K562 (cell line): ENCODE measurements at regions of chr4 and their contacts with region 1.

Region 1: GRCh38 chr4:105471566-105472176 is 2.2 kb downstream of the PPA2 start:
- DNase-seq: peak; percentile 70 to 85 (median 72)
- ATAC-seq: peak; percentile 71
- H3K4me3 ChIP-seq: peak overlapping the region; percentile 79
- H3K27ac ChIP-seq: peak overlapping the region; percentile 85
- H3K4me1 ChIP-seq: peaks cover 8 to 10% of the 10 kb centered on the region in 2 experiments; a peak in 2 of 5 replicates
- H3K27me3 ChIP-seq: no peaks in the 10 kb centered on the region
- CTCF ChIP-seq: peak; percentile 68 to 75 (median 70)
- EP300 ChIP-seq: no peak
- POLR2A ChIP-seq: no peak
- RAD21 ChIP-seq: peak; percentile 69 to 79

Region 2: GRCh38 chr4:104490770-104491480 is 980.7 kb before region 1 on chr4:
- CTCF ChIA-PET with region 1: no interaction called
- POLR2A ChIA-PET with region 1: no interaction called
- in situ Hi-C with region 1: no loop called
- intact Hi-C with region 1: loop called (anchors 10 kb)
- DNase-seq: peak; percentile 46 to 80 (median 56)
- ATAC-seq: peak; percentile 73
- H3K4me3 ChIP-seq: peak overlapping the region; percentile 40
- H3K27ac ChIP-seq: no peak overlapping the region
- H3K4me1 ChIP-seq: peaks cover 0 to 15% of the 10 kb centered on the region in 2 experiments; a peak in 3 of 5 replicates
- H3K27me3 ChIP-seq: no peaks in the 10 kb centered on the region
- CTCF ChIP-seq: no peak
- EP300 ChIP-seq: 0 out of 2 replicates have a peak, but pooled peaks have one; percentile 13
- POLR2A ChIP-seq: no peak
- RAD21 ChIP-seq: no peak

Region 3: GRCh38 chr4:105140684-105141490 is 330.8 kb before region 1 on chr4:
- CTCF ChIA-PET with region 1: no interaction called
- POLR2A ChIA-PET with region 1: interaction called, 3 read pairs
- in situ Hi-C with region 1: loop called (anchors 5 kb)
- intact Hi-C with region 1: loop called (anchors 1 kb)
- DNase-seq: peak in 3 of 4 experiments; percentile 12 to 66 (median 48)
- ATAC-seq: peak; percentile 87
- H3K4me3 ChIP-seq: no peak overlapping the region
- H3K27ac ChIP-seq: no peak overlapping the region
- H3K4me1 ChIP-seq: peaks cover 0 to 2% of the 10 kb centered on the region in 2 experiments; a peak in 3 of 5 replicates
- H3K27me3 ChIP-seq: no peaks in the 10 kb centered on the region; a peak in 1 of 5 replicates
- CTCF ChIP-seq: peak; percentile 60 to 81 (median 65)
- EP300 ChIP-seq: no peak
- POLR2A ChIP-seq: no peak
- RAD21 ChIP-seq: peak; percentile 59 to 68

Region 4: DNA sequence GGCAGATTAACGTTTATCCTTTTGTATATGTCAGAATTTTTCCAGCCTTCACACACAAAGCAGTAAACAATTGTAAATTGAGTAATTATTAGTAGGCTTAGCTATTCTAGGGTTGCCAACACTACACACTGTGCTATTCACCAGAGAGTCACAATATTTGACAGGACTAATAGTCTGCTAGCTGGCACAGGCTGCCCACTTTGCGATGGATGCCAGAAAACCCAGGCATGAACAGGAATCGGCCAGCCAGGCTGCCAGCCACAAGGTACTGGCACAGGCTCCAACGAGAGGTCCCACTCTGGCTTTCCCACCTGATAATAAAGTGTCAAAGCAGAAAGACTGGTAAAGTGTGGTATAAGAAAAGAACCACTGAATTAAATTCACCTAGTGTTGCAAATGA is 230.2 kb before region 1 on chr4:
- CTCF ChIA-PET with region 1: no interaction called
- POLR2A ChIA-PET with region 1: no interaction called
- in situ Hi-C with region 1: no loop called
- intact Hi-C with region 1: loop called (anchors 5 kb)
- DNase-seq: no peak
- ATAC-seq: no peak
- H3K4me3 ChIP-seq: no peak overlapping the region
- H3K27ac ChIP-seq: no peak overlapping the region
- H3K4me1 ChIP-seq: no peaks in the 10 kb centered on the region
- H3K27me3 ChIP-seq: no peaks in the 10 kb centered on the region
- CTCF ChIP-seq: no peak
- EP300 ChIP-seq: no peak
- POLR2A ChIP-seq: no peak
- RAD21 ChIP-seq: no peak

Region 5: GRCh38 chr4:105274504-105274903 is 197.2 kb before region 1 on chr4:
- CTCF ChIA-PET with region 1: no interaction called
- POLR2A ChIA-PET with region 1: no interaction called
- in situ Hi-C with region 1: no loop called
- intact Hi-C with region 1: no loop called
- DNase-seq: no peak
- ATAC-seq: no peak
- H3K4me3 ChIP-seq: no peak overlapping the region
- H3K27ac ChIP-seq: no peak overlapping the region
- H3K4me1 ChIP-seq: no peaks in the 10 kb centered on the region
- H3K27me3 ChIP-seq: no peaks in the 10 kb centered on the region
- CTCF ChIP-seq: no peak
- EP300 ChIP-seq: no peak
- POLR2A ChIP-seq: no peak
- RAD21 ChIP-seq: no peak

Region 6: DNA sequence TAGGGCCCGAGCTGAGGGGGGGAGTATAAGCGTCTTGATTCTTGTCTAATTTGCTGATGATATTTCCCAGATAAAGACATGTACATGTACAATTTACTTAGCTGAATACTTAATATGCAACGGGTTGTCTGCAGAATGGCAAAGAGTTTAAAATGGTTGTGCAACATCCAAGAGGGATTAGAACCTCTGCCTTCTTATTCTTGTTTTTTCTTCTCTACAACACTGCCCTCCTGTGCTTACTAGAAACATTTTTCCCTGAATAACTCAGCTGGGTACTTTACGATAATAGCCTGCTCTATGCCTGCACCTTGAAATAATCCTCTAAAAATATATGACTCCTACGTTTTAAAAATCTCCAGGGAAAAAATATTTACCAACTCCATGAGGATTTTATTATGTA is 195.0 kb after region 1 on chr4:
- CTCF ChIA-PET with region 1: no interaction called
- POLR2A ChIA-PET with region 1: interaction called, 3 read pairs
- in situ Hi-C with region 1: no loop called
- intact Hi-C with region 1: loop called (anchors 1 kb)
- DNase-seq: peak in 2 of 4 experiments; percentile 7 to 9
- ATAC-seq: peak; percentile 87
- H3K4me3 ChIP-seq: no peak overlapping the region
- H3K27ac ChIP-seq: no peak overlapping the region
- H3K4me1 ChIP-seq: no peaks in the 10 kb centered on the region
- H3K27me3 ChIP-seq: no peaks in the 10 kb centered on the region; a peak in 1 of 5 replicates
- CTCF ChIP-seq: peak; percentile 4 to 40 (median 30); a peak in 3 of 6 replicates
- EP300 ChIP-seq: no peak
- POLR2A ChIP-seq: no peak
- RAD21 ChIP-seq: peak; percentile 42 to 54